ENCODE measurements at regions of chr22 and their contacts with region 1.

Region 1: DNA sequence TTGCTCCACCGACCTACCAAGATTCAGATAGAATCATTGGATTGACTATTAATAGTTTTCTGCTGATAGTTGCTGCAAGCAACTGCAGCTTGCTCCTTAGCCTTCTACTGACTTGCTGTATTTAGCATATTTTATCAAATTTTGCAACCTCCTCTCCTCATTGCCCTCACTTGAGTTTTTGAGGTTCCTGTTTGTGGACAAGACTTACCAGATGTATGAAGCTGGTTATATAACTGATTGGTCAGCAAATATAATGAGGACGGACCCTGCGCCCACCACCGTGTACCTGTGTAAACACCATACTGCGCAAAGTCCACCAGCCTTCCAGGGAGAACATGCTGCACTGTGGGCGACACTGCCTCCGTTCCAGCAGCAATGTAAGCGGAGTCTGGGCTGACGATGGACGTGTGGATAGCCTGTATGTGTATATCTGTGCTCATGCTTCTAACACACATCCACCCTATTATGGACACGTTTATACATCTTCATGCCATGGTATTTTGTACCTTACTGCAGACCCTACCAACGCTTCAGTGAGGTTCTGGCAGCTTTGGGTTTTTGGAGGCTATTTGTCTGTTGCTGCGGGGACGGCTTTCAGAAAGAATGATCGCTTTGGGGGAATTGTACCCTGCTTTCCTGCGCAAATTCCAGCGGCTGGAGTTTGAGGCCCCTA is 1.5 kb upstream of the USP18 start:
- DNase-seq: no peak
- ATAC-seq: no peak

Region 2: DNA sequence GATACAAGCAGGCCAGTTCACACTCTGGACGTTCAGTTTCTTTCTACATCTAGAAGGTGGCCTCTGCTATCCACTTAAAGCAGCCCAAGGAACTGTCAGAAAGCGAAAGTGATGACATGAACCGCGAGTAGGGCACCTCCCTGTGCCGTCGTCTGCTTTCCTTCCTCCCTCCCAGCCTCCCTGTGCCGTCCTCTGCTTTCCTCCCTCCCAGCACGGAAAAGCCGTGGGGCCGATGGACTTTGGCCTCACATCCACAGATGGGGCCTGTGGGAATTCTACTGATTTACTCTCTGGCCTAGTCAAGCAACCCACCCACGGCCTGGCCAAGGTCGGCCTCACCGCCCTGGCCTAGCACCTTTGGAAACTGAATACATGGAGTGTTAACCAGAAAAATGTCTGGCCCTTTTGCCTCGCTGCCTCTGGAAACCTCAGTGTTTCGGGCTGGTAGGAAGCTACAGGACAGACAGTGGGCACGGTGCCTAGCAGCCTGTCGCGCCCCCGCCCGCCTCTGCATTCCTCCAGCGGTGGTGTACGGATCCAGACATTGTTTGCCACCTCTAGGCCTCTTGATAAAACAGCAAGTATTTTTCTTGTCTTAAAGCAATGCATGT is 56.4 kb before region 1 on chr22:
- intact Hi-C with region 1: loop called in 1 of 2 experiments (anchors 10 kb)
- DNase-seq: peak; percentile 86
- ATAC-seq: peak; percentile 91 to 92